Common myeloid progenitor, CD34-positive (primary cell): ENCODE measurements at regions of chr11 and their contacts with region 1.

Region 1: GRCh38 chr11:119144825-119145486 is 3.9 kb upstream of the ABCG4 start:
- DNase-seq: peak; percentile 71 to 86 (median 84)
- H3K4me3 ChIP-seq: no peak overlapping the region
- H3K27ac ChIP-seq: no peak overlapping the region
- H3K4me1 ChIP-seq: peaks cover 0 to 18% (median 16%) of the 10 kb centered on the region in 4 experiments
- H3K27me3 ChIP-seq: peaks cover 0 to 38% (median 19%) of the 10 kb centered on the region in 5 experiments

Region 2: GRCh38 chr11:119155733-119156492 is 11.0 kb after region 1 on chr11:
- CTCF ChIA-PET with region 1: interaction called, 23 read pairs
- POLR2A ChIA-PET with region 1: no interaction called
- DNase-seq: peak in 2 of 3 donors; percentile 26 to 36
- H3K4me3 ChIP-seq: no peak overlapping the region
- H3K27ac ChIP-seq: no peak overlapping the region
- H3K4me1 ChIP-seq: no peaks in the 10 kb centered on the region
- H3K27me3 ChIP-seq: peaks cover 0 to 13% (median 5%) of the 10 kb centered on the region in 5 experiments